Mammary epithelial cell (primary cell): ENCODE measurements at regions of chr16 and their contacts with region 1.

Region 1: DNA sequence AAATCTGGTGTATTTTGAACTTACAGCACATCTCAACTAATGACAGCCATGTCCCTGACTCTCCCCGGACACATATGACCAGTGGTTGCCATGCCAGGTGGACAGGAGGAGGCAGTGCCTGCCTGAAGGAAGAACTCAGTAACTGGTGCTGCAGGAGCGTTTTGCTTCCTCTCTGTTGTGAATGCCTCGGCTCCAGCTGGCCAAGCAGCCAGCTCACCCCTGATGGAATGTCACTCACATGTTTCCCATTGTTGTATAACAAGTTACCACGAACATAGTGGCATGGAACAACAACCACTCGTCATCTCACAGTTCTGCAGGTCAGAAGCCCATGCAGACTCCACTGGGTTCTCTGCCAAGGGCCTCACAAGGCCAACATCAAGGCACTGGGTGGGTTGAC is 20.1 kb upstream of the IRF8 start:
- DNase-seq: peak; percentile 57
- H3K4me3 ChIP-seq: no peak overlapping the region
- H3K27ac ChIP-seq: no peak overlapping the region
- H3K4me1 ChIP-seq: no peaks in the 10 kb centered on the region
- H3K27me3 ChIP-seq: peaks cover 4% of the 10 kb centered on the region
- CTCF ChIP-seq: no peak

Region 2: DNA sequence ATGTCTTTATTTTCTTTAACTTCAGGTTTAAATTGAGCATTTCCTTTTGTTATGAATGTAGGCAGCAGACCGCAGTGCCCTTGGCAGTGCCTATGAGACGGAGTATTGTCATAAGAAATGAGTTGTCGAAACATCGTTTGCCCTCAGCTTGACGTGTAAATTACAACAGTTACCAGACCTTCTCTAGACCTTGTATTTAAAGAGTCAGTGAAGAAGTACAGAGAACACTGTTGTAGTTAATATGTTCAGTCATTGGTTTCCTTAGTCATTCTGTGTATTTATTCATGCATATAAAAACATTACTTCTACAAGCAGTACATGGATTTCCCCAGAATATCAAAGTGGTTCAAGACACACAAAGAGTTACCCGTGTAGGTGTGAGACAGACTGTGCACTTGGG is 39.1 kb after region 1 on chr16:
- CTCF ChIA-PET with region 1: no interaction called
- dilution Hi-C with region 1: no loop called
- in situ Hi-C with region 1: no loop called
- intact Hi-C with region 1: loop called (anchors 2 kb)
- DNase-seq: no peak
- H3K4me3 ChIP-seq: no peak overlapping the region
- H3K27ac ChIP-seq: no peak overlapping the region
- H3K4me1 ChIP-seq: no peaks in the 10 kb centered on the region
- H3K27me3 ChIP-seq: no peaks in the 10 kb centered on the region
- CTCF ChIP-seq: no peak

Region 3: GRCh38 chr16:85947230-85948137 is 68.6 kb after region 1 on chr16:
- CTCF ChIA-PET with region 1: no interaction called
- dilution Hi-C with region 1: no loop called
- in situ Hi-C with region 1: no loop called
- intact Hi-C with region 1: no loop called
- DNase-seq: no peak
- H3K4me3 ChIP-seq: no peak overlapping the region
- H3K27ac ChIP-seq: no peak overlapping the region
- H3K4me1 ChIP-seq: no peaks in the 10 kb centered on the region
- H3K27me3 ChIP-seq: no peaks in the 10 kb centered on the region
- CTCF ChIP-seq: no peak